Activated naive CD4-positive, alpha-beta T cell treated with anti-CD3 and anti-CD28 coated beads for 36 hours (primary cell): ENCODE measurements at regions of chr1 and their contacts with region 1.

Region 1: GRCh38 chr1:67685067-67685557 is at the start of gene GADD45A:
- DNase-seq: peak; percentile 98
- H3K4me3 Mint-ChIP-seq: peak within 1 kb of the TSS; percentile 90
- H3K27ac Mint-ChIP-seq: peak within 1 kb of the TSS; percentile 92
- H3K4me1 Mint-ChIP-seq: peaks cover 46% of the 10 kb centered on the region
- H3K27me3 Mint-ChIP-seq: no peaks in the 10 kb centered on the region
- total RNA-seq, gene GADD45A: 47.0 to 48.3 TPM

Region 2: DNA sequence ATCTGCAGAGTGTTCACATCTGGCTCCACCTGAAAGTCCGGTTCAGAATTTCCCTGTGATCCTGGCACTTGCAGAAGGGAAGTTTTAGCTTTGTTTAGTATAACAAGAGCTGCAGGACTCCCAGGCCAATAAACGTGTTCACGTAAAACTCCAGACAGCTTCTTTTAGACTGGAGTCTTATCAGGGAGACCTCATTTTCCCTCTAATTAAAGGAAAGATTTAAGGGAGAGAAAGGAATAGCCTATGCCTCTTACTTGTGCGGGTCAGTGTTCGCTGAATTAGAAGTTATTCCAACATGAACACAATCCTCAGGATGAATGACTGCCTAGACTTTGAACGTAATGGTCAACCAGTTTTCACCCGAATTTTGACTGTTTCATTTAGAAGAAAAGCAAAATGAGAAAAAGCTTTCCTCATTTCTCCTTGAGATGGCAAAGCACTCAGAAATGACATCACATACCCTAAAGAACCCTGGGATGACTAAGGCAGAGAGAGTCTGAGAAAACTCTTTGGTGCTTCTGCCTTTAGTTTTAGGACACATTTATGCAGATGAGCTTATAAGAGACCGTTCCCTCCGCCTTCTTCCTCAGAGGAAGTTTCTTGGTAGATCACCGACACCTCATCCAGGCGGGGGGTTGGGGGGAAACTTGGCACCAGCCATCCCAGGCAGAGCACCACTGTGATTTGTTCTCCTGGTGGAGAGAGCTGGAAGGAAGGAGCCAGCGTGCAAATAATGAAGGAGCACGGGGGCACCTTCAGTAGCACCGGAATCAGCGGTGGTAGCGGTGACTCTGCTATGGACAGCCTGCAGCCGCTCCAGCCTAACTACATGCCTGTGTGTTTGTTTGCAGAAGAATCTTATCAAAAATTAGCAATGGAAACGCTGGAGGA is 1353.2 kb before region 1 on chr1:
- CTCF ChIA-PET with region 1: no interaction called
- intact Hi-C with region 1: loop called (anchors 10 kb)
- DNase-seq: peak; percentile 76
- H3K4me3 Mint-ChIP-seq: peak overlapping the region; percentile 98
- H3K27ac Mint-ChIP-seq: peak overlapping the region; percentile 95
- H3K4me1 Mint-ChIP-seq: peaks cover 42% of the 10 kb centered on the region
- H3K27me3 Mint-ChIP-seq: no peaks in the 10 kb centered on the region

Region 3: DNA sequence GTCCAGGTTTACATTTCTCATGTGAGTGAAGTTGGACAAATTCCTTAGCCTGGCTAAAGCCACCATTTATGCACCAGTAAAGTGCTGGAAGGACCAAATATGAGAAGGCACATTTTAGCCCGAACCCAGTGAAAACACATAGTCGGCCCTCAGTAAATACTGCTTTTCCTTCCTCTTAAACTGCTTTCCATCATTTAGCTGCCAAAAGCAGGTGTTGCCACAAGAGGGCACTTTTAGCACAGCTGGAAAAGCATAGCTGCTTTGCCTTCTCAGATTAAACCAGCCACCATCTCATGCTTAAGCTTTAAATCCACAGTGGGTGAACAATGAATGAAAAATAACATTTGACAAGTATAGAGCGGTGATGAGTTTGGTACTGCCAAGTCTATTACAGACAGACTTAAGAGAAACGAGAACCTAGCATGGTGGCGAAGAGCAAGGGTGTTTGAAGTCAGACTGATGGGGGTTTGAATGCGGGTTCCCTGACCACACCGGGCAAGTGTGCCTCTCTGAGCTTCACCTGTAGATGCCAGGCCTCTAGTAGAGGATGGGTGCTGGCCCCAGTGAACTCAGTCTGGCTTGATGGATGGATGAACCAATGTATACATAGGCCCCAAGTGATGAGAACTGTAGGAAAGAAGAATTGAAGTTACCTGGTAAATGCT is 689.0 kb before region 1 on chr1:
- CTCF ChIA-PET with region 1: no interaction called
- intact Hi-C with region 1: loop called (anchors 10 kb)
- DNase-seq: peak; percentile 89
- H3K4me3 Mint-ChIP-seq: no peak overlapping the region
- H3K27ac Mint-ChIP-seq: no peak overlapping the region
- H3K4me1 Mint-ChIP-seq: peaks cover 26% of the 10 kb centered on the region
- H3K27me3 Mint-ChIP-seq: no peaks in the 10 kb centered on the region

Region 4: GRCh38 chr1:67194209-67194863 is 490.8 kb before region 1 on chr1:
- CTCF ChIA-PET with region 1: no interaction called
- intact Hi-C with region 1: loop called (anchors 2 kb)
- DNase-seq: no peak
- H3K4me3 Mint-ChIP-seq: no peak overlapping the region
- H3K27ac Mint-ChIP-seq: no peak overlapping the region
- H3K4me1 Mint-ChIP-seq: peaks cover 39% of the 10 kb centered on the region
- H3K27me3 Mint-ChIP-seq: no peaks in the 10 kb centered on the region

Region 5: DNA sequence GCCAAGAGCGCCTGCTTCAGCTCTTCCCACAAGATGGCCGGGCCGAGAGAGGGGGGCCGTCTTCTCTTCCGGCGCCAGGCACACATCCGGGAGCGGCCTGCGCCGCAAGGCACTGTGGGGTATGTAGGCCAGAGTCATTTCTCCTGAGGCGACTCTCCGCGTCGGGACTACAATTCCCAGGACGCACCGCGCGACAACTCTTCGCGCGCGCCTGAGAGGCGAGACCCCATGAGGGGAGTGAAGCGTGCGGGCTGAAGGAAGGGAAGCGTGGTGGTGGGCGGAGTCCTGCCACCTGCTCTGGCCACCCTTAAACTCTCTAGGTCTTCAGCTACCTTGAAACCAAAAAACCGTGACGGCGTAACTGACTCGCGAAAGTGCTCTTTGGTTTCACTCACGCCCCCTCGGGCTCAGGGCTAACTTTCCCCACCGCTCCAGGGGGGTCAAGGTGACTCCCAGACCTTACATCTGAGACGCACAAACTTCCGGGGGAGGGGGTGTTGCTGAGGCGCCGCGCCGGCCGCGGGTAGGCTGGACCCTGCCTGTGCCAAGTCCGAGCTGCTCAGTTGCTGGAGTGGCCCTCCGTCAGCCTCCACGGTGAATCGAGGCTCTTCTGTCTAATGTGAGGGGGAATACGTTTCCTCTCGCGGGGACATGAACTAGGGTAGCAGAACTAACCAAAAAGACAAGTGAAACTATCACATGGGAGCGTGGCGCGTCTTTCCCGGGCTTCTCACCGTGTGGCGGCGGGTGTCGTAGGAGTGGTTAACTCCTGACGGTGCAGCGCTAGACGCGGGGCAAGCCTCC is 254.6 kb before region 1 on chr1 and contains the start of gene SERBP1:
- CTCF ChIA-PET with region 1: no interaction called
- intact Hi-C with region 1: loop called (anchors 1 kb)
- DNase-seq: peak; percentile 97
- H3K4me3 Mint-ChIP-seq: peak within 1 kb of the TSS; percentile 97
- H3K27ac Mint-ChIP-seq: peak within 1 kb of the TSS; percentile 98
- H3K4me1 Mint-ChIP-seq: peaks cover 44% of the 10 kb centered on the region
- H3K27me3 Mint-ChIP-seq: no peaks in the 10 kb centered on the region
- total RNA-seq, gene SERBP1: 527 to 537 TPM

Region 6: DNA sequence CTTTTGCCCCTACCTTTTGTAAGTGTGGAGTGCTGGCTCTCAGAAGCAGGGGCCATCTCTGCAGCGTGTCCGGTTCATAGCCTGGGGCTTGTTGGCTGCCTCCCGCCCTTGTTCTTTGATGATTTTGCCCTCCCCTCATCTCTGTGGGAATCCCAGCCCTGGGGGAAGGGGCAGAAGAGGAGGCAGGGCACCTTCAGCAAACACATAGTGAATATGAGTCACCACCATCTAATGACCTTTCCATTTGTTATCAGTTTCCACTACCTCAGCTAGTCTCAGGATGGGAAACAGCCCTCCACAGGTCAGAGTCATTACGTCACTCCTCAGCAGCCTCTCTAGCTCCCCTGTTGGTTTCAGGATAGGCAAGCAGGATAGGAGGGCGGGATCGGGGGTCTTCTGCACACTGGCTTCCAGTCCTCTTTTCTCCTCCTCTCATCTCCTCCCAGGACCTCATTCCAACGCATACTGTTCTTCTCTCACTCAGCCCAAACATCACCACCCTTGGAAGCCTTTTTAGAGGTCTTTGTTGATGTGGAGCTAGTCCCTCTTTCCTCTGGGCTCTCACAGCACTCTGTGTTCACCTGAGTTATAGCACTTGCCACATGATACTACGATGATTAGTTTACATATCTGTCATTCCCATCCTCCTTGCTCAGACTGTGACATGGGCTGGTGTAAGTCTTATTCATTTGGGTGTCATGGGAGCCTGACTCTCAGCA is 15.7 kb after region 1 on chr1:
- CTCF ChIA-PET with region 1: interaction called, 5 read pairs
- intact Hi-C with region 1: loop called (anchors 1 kb)
- DNase-seq: peak; percentile 50
- H3K4me3 Mint-ChIP-seq: no peak overlapping the region
- H3K27ac Mint-ChIP-seq: no peak overlapping the region
- H3K4me1 Mint-ChIP-seq: peaks cover 13% of the 10 kb centered on the region
- H3K27me3 Mint-ChIP-seq: no peaks in the 10 kb centered on the region